ENCODE measurements at regions of chr12 and their contacts with region 1.

Region 1: GRCh38 chr12:5988659-5989116 is 43.6 kb upstream of the ANO2 start:
- DNase-seq: peak; percentile 65 to 77
- ATAC-seq: peak; percentile 80 to 93 (median 90)
- H3K4me3 ChIP-seq: no peak overlapping the region
- H3K27ac ChIP-seq: no peak overlapping the region
- H3K4me1 ChIP-seq: peaks cover 0 to 9% (median 0%) of the 10 kb centered on the region in 9 donors
- H3K27me3 ChIP-seq: peaks cover 0 to 3% (median 0%) of the 10 kb centered on the region in 7 donors
- CTCF ChIP-seq: peak; percentile 87 to 97 (median 94)

Region 2: GRCh38 chr12:6033546-6033945 is 44.9 kb after region 1 on chr12:
- intact Hi-C with region 1: loop called in 4 of 10 experiments (anchors 2 kb)
- DNase-seq: no peak
- ATAC-seq: no peak
- H3K4me3 ChIP-seq: no peak overlapping the region
- H3K27ac ChIP-seq: no peak overlapping the region
- H3K4me1 ChIP-seq: peaks cover 0 to 5% (median 0%) of the 10 kb centered on the region in 9 donors
- H3K27me3 ChIP-seq: no peaks in the 10 kb centered on the region
- CTCF ChIP-seq: no peak

Region 3: GRCh38 chr12:6039894-6040568 is 51.3 kb after region 1 on chr12:
- intact Hi-C with region 1: loop called (anchors 1 to 10 kb)
- DNase-seq: peak in 1 of 2 donors; percentile 67
- ATAC-seq: peak; percentile 43 to 85 (median 76)
- H3K4me3 ChIP-seq: no peak overlapping the region
- H3K27ac ChIP-seq: no peak overlapping the region
- H3K4me1 ChIP-seq: no peaks in the 10 kb centered on the region
- H3K27me3 ChIP-seq: no peaks in the 10 kb centered on the region
- CTCF ChIP-seq: peak; percentile 65 to 89 (median 84)

Region 4: DNA sequence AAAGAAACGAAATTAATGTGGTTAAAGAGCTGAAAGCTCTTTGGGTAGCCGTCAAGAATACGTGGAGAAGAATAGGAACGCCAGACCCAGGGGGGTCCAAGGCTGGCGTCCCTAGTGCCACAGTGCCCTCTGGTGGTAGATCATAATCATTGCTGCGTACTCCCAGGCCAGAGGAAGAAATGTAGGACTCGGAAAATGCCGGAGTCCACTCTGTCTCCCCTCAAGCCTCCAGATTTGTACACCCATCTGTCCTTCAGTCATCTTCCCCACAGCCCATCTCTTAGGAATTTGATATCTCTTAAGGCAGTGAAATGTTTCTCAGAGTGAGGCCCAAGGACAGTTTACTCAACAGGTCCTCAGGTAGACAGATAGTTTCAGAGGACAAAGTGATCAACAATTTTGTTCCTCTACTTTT is 296.4 kb after region 1 on chr12:
- intact Hi-C with region 1: loop called in 9 of 10 experiments (anchors 2 to 10 kb)
- DNase-seq: peak; percentile 47 to 74
- ATAC-seq: peak; percentile 68 to 91 (median 88)
- H3K4me3 ChIP-seq: no peak overlapping the region
- H3K27ac ChIP-seq: no peak overlapping the region
- H3K4me1 ChIP-seq: peaks cover 0 to 14% (median 3%) of the 10 kb centered on the region in 9 donors
- H3K27me3 ChIP-seq: peaks cover 0 to 4% (median 0%) of the 10 kb centered on the region in 7 donors
- CTCF ChIP-seq: peak; percentile 89 to 98 (median 95)